A673 (cell line): ENCODE measurements at regions of chr3 and their contacts with region 1.

Region 1: DNA sequence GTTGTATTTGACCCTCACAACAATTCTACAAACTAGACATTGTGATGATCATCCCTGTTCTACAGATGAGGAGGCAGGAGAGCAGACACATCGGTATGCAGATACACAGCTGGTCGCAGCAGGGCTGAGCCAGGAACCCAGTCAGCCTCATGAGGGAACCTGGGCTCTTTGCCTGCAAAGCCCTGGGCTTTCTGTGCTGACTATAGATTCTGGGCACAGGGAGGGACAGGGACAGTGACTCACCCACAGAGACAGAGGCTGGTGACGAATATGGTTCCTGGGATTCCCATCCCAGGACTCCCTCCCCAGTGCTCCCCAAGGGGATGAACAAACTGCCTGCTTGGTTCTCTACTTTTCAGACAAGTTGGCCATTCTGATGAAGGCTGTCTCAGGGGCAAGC is 3.8 kb upstream of the CAMP start:
- DNase-seq: no peak
- H3K4me3 ChIP-seq: no peak overlapping the region
- H3K27ac ChIP-seq: no peak overlapping the region
- H3K4me1 ChIP-seq: no peaks in the 10 kb centered on the region
- H3K27me3 ChIP-seq: no peaks in the 10 kb centered on the region
- CTCF ChIP-seq: no peak

Region 2: GRCh38 chr3:48306860-48307530 is 87.5 kb after region 1 on chr3:
- CTCF ChIA-PET with region 1: no interaction called
- POLR2A ChIA-PET with region 1: interaction called, 15 read pairs
- intact Hi-C with region 1: no loop called
- DNase-seq: no peak
- H3K4me3 ChIP-seq: no peak overlapping the region
- H3K27ac ChIP-seq: no peak overlapping the region
- H3K4me1 ChIP-seq: no peaks in the 10 kb centered on the region
- H3K27me3 ChIP-seq: no peaks in the 10 kb centered on the region
- CTCF ChIP-seq: no peak